Panc1 (cell line): ENCODE measurements at regions of chr3 and their contacts with region 1.

Region 1: DNA sequence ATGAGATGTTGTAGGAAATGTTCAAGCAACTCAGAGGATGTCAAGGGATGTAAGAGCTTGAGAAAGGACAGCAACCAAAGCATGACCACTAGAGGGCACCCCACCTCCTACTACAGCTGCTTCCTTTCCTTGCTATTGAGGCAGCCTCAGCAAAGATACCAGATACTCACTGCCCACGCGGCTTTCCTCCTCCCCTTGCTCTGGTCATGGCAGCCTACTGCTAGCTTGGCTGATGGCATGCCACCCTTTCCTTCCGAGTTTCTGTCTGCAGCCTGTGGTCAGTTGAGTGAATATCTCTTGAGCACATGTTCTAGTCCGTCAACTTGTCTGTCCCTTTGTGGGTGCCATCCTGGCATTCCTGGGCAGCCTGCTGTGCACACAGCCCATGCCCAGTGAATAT is 4.4 kb upstream of the CXCR6 start:
- DNase-seq: peak; percentile 66
- ATAC-seq: peak; percentile 91
- H3K4me3 ChIP-seq: no peak overlapping the region
- H3K27ac ChIP-seq: no peak overlapping the region
- H3K4me1 ChIP-seq: no peaks in the 10 kb centered on the region
- H3K27me3 ChIP-seq: no peaks in the 10 kb centered on the region
- CTCF ChIP-seq: peak; percentile 84

Region 2: GRCh38 chr3:46078712-46079400 is 140.0 kb after region 1 on chr3:
- CTCF ChIA-PET with region 1: interaction called, 19 read pairs
- POLR2A ChIA-PET with region 1: no interaction called
- in situ Hi-C with region 1: no loop called
- intact Hi-C with region 1: loop called (anchors 1 kb)
- DNase-seq: peak; percentile 85
- ATAC-seq: peak; percentile 99
- H3K4me3 ChIP-seq: no peak overlapping the region
- H3K27ac ChIP-seq: no peak overlapping the region
- H3K4me1 ChIP-seq: no peaks in the 10 kb centered on the region
- H3K27me3 ChIP-seq: no peaks in the 10 kb centered on the region
- CTCF ChIP-seq: peak; percentile 94

Region 3: DNA sequence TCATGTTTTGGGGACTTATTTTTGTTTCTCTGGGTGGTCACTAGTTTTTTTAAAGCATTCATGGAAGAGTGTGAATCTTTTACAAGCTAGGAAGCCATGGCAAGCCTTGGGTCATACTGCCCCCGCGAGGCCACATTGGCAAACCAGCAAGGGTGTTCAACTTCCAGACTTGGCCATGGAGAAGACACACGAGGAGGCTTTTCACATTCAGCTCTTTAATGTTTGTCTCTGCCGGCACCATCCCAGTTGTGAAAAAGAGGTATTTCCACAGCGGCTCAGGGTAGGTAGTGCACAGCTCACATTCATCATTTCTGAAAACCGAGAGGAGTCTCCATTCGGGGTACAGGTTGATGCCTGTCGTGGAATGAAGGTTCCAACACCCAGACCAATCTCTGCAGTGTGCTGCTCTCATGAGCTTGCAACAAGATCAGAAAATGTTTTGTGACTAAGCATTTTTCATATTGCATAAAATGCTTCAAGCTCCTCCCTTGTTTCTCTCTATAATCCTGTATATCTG is 439.6 kb after region 1 on chr3:
- CTCF ChIA-PET with region 1: interaction called, 4 read pairs
- POLR2A ChIA-PET with region 1: no interaction called
- in situ Hi-C with region 1: no loop called
- intact Hi-C with region 1: loop called (anchors 10 kb)
- DNase-seq: no peak
- ATAC-seq: peak; percentile 81
- H3K4me3 ChIP-seq: no peak overlapping the region
- H3K27ac ChIP-seq: no peak overlapping the region
- H3K4me1 ChIP-seq: no peaks in the 10 kb centered on the region
- H3K27me3 ChIP-seq: no peaks in the 10 kb centered on the region; the same call in 1 of the 2 replicates
- CTCF ChIP-seq: peak; percentile 81